Activated CD4-positive, alpha-beta T cell treated with anti-CD3 and anti-CD28 coated beads for 36 hours (primary cell): ENCODE measurements at regions of chr12 and their contacts with region 1.

Region 1: DNA sequence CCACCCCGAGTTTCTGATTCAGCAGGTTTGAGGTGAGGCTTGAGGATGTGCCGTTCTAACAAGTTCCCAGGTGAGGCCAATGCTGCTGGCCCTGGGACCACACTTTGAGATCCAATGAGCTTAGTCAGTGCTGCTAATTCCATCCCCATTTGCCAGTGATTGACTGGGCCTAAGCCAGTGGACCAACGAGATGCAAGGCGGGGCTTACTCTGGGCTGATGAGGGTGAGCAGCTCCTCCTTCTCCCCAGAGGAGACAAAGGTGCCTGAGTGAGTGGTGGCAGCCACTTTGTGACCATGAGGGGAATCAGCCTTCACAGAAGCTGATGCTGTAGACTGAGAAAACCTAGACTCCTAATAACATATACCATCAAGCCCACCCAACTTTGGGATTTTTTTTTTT is 23.1 kb upstream of the HNF1A start:
- DNase-seq: no peak
- ATAC-seq: no peak
- H3K4me3 Mint-ChIP-seq: no peak overlapping the region
- H3K27ac Mint-ChIP-seq: no peak overlapping the region
- H3K4me1 Mint-ChIP-seq: peaks cover 12% of the 10 kb centered on the region
- H3K27me3 Mint-ChIP-seq: no peaks in the 10 kb centered on the region

Region 2: GRCh38 chr12:120394483-120395367 is 560.5 kb before region 1 on chr12:
- CTCF ChIA-PET with region 1: no interaction called
- POLR2A ChIA-PET with region 1: interaction called, 10 read pairs
- intact Hi-C with region 1: no loop called
- DNase-seq: no peak
- ATAC-seq: no peak
- H3K4me3 Mint-ChIP-seq: no peak overlapping the region
- H3K27ac Mint-ChIP-seq: no peak overlapping the region
- H3K4me1 Mint-ChIP-seq: peaks cover 3% of the 10 kb centered on the region
- H3K27me3 Mint-ChIP-seq: peaks cover 27% of the 10 kb centered on the region